K562 (cell line): ENCODE measurements at regions of chr9 and their contacts with region 1.

Region 1: GRCh38 chr9:113886466-113886865 is 10.4 kb downstream of the ZNF618 start:
- DNase-seq: no peak
- ATAC-seq: no peak
- H3K4me3 ChIP-seq: no peak overlapping the region
- H3K27ac ChIP-seq: 0 out of 3 replicates have a peak overlapping the region, but pooled peaks have one; percentile 55
- H3K4me1 ChIP-seq: peaks cover 3 to 47% of the 10 kb centered on the region in 2 experiments; a peak in 4 of 5 replicates
- H3K27me3 ChIP-seq: no peaks in the 10 kb centered on the region
- CTCF ChIP-seq: no peak
- EP300 ChIP-seq: no peak
- POLR2A ChIP-seq: no peak
- RAD21 ChIP-seq: no peak

Region 2: GRCh38 chr9:113675475-113675941 is 211.0 kb before region 1 on chr9:
- CTCF ChIA-PET with region 1: no interaction called
- POLR2A ChIA-PET with region 1: no interaction called
- in situ Hi-C with region 1: no loop called
- intact Hi-C with region 1: no loop called
- DNase-seq: peak in 2 of 4 experiments; percentile 27 to 44
- ATAC-seq: peak; percentile 75
- H3K4me3 ChIP-seq: no peak overlapping the region
- H3K27ac ChIP-seq: no peak overlapping the region
- H3K4me1 ChIP-seq: no peaks in the 10 kb centered on the region; a peak in 2 of 5 replicates
- H3K27me3 ChIP-seq: peaks cover 21 to 72% of the 10 kb centered on the region in 2 experiments; a peak in 3 of 5 replicates
- CTCF ChIP-seq: no peak
- EP300 ChIP-seq: no peak
- POLR2A ChIP-seq: no peak
- RAD21 ChIP-seq: no peak

Region 3: DNA sequence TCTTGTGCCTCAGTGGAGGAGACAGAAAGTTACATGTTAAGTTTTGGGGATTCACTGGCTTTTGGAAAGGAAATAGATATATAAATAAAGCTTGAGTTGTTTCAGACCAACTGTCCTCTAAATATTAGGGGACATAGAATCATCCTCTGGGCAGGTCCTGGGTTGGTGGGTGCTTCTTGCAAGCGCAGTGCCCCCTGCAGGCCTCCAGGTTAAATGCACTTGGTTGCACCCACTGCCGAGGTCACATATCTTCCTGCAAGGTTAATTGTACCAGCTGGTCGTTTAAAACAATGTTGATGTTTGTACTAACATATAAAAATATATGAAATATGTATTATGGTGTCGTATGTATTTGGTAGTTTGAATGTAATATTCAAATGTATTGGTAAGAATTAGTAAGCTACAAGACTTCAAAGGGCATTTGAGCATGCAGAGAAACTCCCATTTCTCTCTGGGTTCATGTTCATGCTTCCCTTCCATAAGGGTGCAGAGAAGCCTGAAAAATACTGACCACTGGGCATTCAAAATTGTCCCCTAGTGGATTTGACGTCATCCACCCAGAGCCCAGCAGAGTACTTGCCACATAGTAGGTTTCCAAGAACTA is 76.7 kb after region 1 on chr9:
- CTCF ChIA-PET with region 1: no interaction called
- POLR2A ChIA-PET with region 1: no interaction called
- in situ Hi-C with region 1: no loop called
- intact Hi-C with region 1: loop called (anchors 5 kb)
- DNase-seq: peak; percentile 61 to 78 (median 74)
- ATAC-seq: peak; percentile 96
- H3K4me3 ChIP-seq: no peak overlapping the region
- H3K27ac ChIP-seq: no peak overlapping the region
- H3K4me1 ChIP-seq: no peaks in the 10 kb centered on the region
- H3K27me3 ChIP-seq: no peaks in the 10 kb centered on the region
- CTCF ChIP-seq: peak; percentile 72 to 85 (median 85)
- EP300 ChIP-seq: no peak
- POLR2A ChIP-seq: no peak
- RAD21 ChIP-seq: peak; percentile 46 to 59; a peak in 3 of 4 replicates